ENCODE measurements at regions of chr3 and their contacts with region 1.

Region 1: DNA sequence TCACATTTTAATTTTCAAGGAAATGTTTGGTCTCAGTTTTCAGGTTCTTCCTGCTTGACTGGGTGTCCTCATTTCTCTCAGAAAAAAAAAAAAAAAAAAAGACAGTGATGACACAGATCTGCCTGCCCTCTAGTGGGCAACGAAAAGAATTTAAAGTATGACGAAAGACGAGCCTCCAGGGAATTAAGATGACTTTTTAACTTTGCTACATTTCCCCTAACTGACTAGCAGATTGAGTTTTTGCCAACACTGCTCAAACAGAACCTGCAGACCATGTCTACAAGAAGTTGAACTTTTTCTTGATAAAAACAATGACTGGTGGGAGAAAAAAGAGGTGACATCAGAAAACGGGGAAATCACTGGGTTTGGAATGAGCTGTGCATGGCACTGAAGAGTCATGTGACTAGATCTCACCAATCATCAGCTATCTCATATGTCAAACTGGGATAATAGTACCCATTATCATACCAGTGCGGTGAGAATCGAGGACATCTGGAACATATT is 40.8 kb downstream of the EOMES start:
- DNase-seq: peak; percentile 91
- H3K4me3 ChIP-seq: peak overlapping the region; percentile 35
- H3K27ac ChIP-seq: peak overlapping the region; percentile 65
- H3K4me1 ChIP-seq: peaks cover 49% of the 10 kb centered on the region
- H3K27me3 ChIP-seq: no peaks in the 10 kb centered on the region

Region 2: DNA sequence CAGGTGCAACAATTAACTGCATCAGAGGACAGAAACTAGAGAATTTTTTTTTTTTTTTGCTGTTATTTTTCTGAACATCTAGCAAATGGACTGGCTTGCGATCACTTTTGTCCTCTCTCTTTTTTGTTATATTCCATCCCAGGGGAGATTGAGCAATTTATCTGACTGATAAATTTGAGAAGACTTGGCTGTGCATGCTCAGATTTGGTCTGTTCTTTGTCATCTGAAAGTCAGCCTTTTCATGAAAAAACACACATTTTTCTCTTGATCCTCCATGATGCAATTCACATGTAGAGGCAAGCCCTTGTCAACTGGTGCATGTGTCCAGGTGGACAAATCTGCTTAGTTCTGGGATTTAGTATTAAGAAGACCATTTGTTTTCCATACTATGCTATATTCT is 749.4 kb before region 1 on chr3:
- in situ Hi-C with region 1: no loop called
- DNase-seq: no peak
- H3K4me3 ChIP-seq: no peak overlapping the region
- H3K27ac ChIP-seq: no peak overlapping the region
- H3K4me1 ChIP-seq: no peaks in the 10 kb centered on the region
- H3K27me3 ChIP-seq: no peaks in the 10 kb centered on the region

Region 3: DNA sequence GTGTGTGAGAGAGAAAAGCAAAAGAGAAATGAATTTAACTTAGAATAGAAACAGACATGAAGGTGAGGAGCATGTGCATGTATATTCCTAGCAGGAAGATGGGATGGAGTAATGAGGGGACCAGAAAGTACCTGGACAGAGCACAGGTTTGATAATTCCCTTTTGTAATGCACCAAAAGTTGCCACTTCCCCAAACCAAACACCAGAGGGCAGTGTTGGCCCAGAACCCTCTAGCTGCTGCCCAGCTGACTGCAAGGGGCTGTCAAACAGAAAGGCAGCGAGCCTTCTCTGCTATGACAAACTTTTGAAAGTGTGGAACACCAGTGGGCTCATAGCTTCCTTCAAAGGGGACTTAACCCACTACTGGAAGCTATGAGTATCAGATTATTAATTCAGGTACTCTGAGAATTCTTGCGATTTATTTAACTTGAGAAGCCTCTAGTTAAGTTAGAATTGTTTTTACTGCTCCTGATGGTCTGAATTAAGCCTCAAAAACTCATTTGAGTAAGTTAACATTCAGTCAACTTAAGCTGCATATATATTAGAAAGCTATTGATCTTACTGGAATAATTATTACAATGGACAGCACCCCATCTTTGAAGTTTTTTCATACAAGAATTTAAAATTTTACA is 547.0 kb before region 1 on chr3:
- in situ Hi-C with region 1: loop called (anchors 25 kb)
- DNase-seq: peak; percentile 74
- H3K4me3 ChIP-seq: no peak overlapping the region
- H3K27ac ChIP-seq: no peak overlapping the region
- H3K4me1 ChIP-seq: no peaks in the 10 kb centered on the region
- H3K27me3 ChIP-seq: no peaks in the 10 kb centered on the region

Region 4: DNA sequence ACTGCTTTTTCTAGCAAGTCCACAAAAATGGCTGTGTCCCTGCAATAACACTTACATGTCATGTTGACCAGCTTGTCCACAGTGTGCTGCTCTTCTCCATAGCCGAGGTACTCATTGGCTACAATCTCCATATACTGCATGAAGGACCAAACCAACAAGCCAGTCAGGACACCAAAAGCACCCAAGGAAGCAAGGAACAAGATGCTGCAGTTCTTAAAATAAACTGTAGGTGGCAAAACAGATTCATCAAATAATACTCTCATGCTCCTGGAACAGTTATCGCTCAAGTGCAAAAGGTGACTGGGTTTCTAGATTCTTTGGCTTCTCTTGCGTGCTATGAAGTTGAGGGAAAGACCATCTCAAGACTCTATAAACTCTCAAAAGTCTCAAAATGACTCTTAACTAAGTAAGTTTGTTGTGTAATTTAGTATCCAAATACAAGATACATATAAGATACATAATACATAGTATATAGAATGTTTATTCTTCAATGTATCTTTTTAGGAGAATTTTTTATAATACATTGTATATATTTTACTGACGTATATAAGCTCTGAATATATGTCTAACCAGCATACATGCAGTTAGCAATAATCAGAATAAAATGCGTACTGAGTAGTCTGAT is 369.1 kb before region 1 on chr3:
- in situ Hi-C with region 1: loop called (anchors 25 kb)
- DNase-seq: peak; percentile 74
- H3K4me3 ChIP-seq: peak overlapping the region; percentile 31
- H3K27ac ChIP-seq: peak overlapping the region; percentile 84
- H3K4me1 ChIP-seq: peaks cover 26% of the 10 kb centered on the region
- H3K27me3 ChIP-seq: no peaks in the 10 kb centered on the region

Region 5: GRCh38 chr3:27824312-27825200 is 143.3 kb after region 1 on chr3:
- in situ Hi-C with region 1: no loop called
- DNase-seq: no peak
- H3K4me3 ChIP-seq: no peak overlapping the region
- H3K27ac ChIP-seq: no peak overlapping the region
- H3K4me1 ChIP-seq: no peaks in the 10 kb centered on the region
- H3K27me3 ChIP-seq: peaks cover 9% of the 10 kb centered on the region; the same call in 1 of the 2 replicates

Region 6: GRCh38 chr3:28036599-28037575 is 355.6 kb after region 1 on chr3:
- in situ Hi-C with region 1: no loop called
- DNase-seq: no peak
- H3K4me3 ChIP-seq: no peak overlapping the region
- H3K27ac ChIP-seq: no peak overlapping the region
- H3K4me1 ChIP-seq: no peaks in the 10 kb centered on the region
- H3K27me3 ChIP-seq: no peaks in the 10 kb centered on the region

Region 7: DNA sequence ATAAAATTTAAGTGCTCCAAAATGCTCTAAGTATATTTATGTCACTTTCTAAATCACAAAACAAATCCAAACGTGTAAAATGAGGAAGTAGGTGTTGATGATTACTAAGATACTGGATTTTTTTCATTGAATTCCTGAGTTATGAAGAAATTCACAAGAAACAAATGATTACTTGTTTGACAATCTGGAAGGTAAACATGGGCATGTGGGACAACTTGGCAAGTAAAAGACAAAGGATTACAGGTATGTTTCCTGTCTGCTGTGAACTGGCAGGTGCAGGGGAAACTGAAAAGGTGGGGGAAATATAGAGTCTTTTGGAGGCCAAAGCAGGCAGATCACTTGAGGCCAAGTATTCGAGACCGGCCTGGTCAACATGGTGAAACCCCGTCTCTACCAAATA is 920.0 kb after region 1 on chr3:
- in situ Hi-C with region 1: no loop called
- DNase-seq: no peak
- H3K4me3 ChIP-seq: no peak overlapping the region
- H3K27ac ChIP-seq: no peak overlapping the region
- H3K4me1 ChIP-seq: no peaks in the 10 kb centered on the region
- H3K27me3 ChIP-seq: no peaks in the 10 kb centered on the region